ENCODE measurements at regions of chr18 and their contacts with region 1.

Region 1: GRCh38 chr18:34976899-34977837 is 64.0 kb upstream of the MAPRE2 start:
- DNase-seq: peak; percentile 19
- ATAC-seq: peak; percentile 52
- H3K4me3 ChIP-seq: peak overlapping the region; percentile 73
- H3K27ac ChIP-seq: no peak overlapping the region
- H3K4me1 ChIP-seq: no peaks in the 10 kb centered on the region
- H3K27me3 ChIP-seq: peaks cover 25% of the 10 kb centered on the region
- CTCF ChIP-seq: no peak
- POLR2A ChIP-seq: no peak
- RAD21 ChIP-seq: no peak

Region 2: DNA sequence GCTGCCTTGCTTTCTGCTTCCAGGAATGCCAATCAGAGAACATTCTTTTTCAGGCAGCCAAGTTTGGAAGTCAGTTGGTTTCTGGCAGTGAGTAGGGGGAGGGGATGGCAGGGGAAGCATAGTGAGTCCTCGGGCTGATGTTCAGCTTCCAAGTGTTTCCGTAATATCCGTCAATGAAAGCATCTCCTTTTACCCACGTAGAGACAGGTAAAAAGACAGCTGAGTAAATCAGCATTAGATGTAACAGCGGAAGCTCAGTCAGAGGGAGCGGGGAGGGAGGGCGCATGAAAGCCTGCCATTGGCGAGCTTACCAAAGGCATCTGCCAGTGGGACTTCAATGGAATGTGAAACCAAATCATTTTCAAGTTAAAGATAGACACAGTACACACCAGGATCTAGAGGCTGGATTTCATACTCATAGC is 384.2 kb before region 1 on chr18:
- CTCF ChIA-PET with region 1: no interaction called
- POLR2A ChIA-PET with region 1: no interaction called
- dilution Hi-C with region 1: no loop called
- in situ Hi-C with region 1: no loop called
- intact Hi-C with region 1: loop called (anchors 10 kb)
- DNase-seq: peak; percentile 59
- ATAC-seq: peak; percentile 98
- H3K4me3 ChIP-seq: peak overlapping the region; percentile 40
- H3K27ac ChIP-seq: peak overlapping the region; percentile 12; the same call in 1 of the 2 replicates
- H3K4me1 ChIP-seq: peaks cover 4% of the 10 kb centered on the region
- H3K27me3 ChIP-seq: peaks cover 3% of the 10 kb centered on the region
- CTCF ChIP-seq: no peak
- POLR2A ChIP-seq: no peak
- RAD21 ChIP-seq: no peak

Region 3: GRCh38 chr18:34867520-34867919 is 109.6 kb before region 1 on chr18:
- CTCF ChIA-PET with region 1: no interaction called
- POLR2A ChIA-PET with region 1: no interaction called
- dilution Hi-C with region 1: no loop called
- in situ Hi-C with region 1: no loop called
- intact Hi-C with region 1: loop called (anchors 2 kb)
- DNase-seq: no peak
- ATAC-seq: no peak
- H3K4me3 ChIP-seq: no peak overlapping the region
- H3K27ac ChIP-seq: no peak overlapping the region
- H3K4me1 ChIP-seq: peaks cover 2% of the 10 kb centered on the region; the same call in 1 of the 2 replicates
- H3K27me3 ChIP-seq: no peaks in the 10 kb centered on the region
- CTCF ChIP-seq: no peak
- POLR2A ChIP-seq: no peak
- RAD21 ChIP-seq: no peak

Region 4: GRCh38 chr18:34912010-34912721 is 65.0 kb before region 1 on chr18:
- CTCF ChIA-PET with region 1: no interaction called
- POLR2A ChIA-PET with region 1: no interaction called
- dilution Hi-C with region 1: no loop called
- in situ Hi-C with region 1: no loop called
- intact Hi-C with region 1: loop called (anchors 2 kb)
- DNase-seq: peak; percentile 93
- ATAC-seq: peak; percentile 92
- H3K4me3 ChIP-seq: no peak overlapping the region
- H3K27ac ChIP-seq: peak overlapping the region; percentile 29; the same call in 1 of the 2 replicates
- H3K4me1 ChIP-seq: peaks cover 16% of the 10 kb centered on the region
- H3K27me3 ChIP-seq: no peaks in the 10 kb centered on the region
- CTCF ChIP-seq: 0 out of 2 replicates have a peak, but pooled peaks have one; percentile 13
- POLR2A ChIP-seq: no peak
- RAD21 ChIP-seq: no peak

Region 5: GRCh38 chr18:35040988-35041814 is 64.0 kb after region 1 on chr18 and contains the start of gene MAPRE2:
- CTCF ChIA-PET with region 1: no interaction called
- POLR2A ChIA-PET with region 1: no interaction called
- dilution Hi-C with region 1: no loop called
- in situ Hi-C with region 1: no loop called
- intact Hi-C with region 1: loop called (anchors 5 kb)
- DNase-seq: peak; percentile 96
- ATAC-seq: peak; percentile 95
- H3K4me3 ChIP-seq: peak within 1 kb of the TSS; percentile 89
- H3K27ac ChIP-seq: peak within 1 kb of the TSS; percentile 77
- H3K4me1 ChIP-seq: peaks cover 3% of the 10 kb centered on the region; the same call in 1 of the 2 replicates
- H3K27me3 ChIP-seq: peaks cover 1% of the 10 kb centered on the region; the same call in 1 of the 2 replicates
- CTCF ChIP-seq: no peak
- POLR2A ChIP-seq: peak; percentile 89
- RAD21 ChIP-seq: no peak
- total RNA-seq, gene MAPRE2: 23.8 and 24.2 TPM in 2 replicates